B cell (primary cell): ENCODE measurements at regions of chr2 and their contacts with region 1.

Region 1: DNA sequence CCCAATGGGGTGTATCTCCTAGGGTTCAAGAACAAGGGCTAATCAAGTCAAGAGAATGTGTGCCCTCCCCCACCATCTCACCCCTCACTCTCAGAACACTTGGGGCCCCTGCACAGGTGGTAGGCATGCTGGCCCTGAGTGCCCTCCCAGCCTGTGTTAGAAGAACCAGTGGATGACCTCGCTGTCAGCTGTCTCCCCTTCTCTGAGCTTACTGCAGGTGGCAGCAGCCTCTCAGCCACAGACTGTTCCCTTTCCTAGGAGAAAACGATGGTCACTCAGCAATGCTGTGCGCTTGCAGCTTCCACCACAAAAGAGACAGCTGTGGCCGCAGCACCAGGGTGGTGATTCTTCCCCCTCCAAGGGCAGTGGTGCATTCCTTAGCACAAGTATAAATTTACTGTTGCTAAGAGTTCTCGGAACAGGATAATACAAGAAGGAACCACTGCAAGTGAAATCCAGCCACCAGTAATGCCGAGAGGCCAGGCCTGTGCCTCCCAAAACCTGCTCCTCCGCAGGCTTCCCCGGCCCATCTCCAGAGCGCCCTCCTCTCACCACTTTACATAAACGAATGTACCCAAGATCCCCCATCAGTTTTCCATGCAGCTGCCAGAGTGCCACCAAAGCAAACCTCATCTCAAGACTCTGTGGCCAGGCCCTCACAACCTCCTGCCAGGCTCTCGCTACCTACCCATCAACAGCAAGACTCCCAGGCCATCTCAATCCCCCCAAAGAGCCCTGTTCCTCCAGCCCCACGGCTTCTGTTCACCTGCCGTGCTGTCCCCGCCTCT is 935 bp upstream of the RAMP1 start:
- DNase-seq: peak; percentile 43
- ATAC-seq: peak; percentile 80
- H3K4me3 ChIP-seq: no peak overlapping the region
- H3K4me3 Mint-ChIP-seq: peak overlapping the region; percentile 62
- H3K27ac ChIP-seq: no peak overlapping the region
- H3K27ac Mint-ChIP-seq: no peak overlapping the region
- H3K4me1 ChIP-seq: no peaks in the 10 kb centered on the region
- H3K4me1 Mint-ChIP-seq: peaks cover 17% of the 10 kb centered on the region
- H3K27me3 ChIP-seq: peaks cover 0 to 37% (median 13%) of the 10 kb centered on the region in 4 experiments
- H3K27me3 Mint-ChIP-seq: peaks cover 44% of the 10 kb centered on the region
- CTCF ChIP-seq: peak; percentile 43

Region 2: DNA sequence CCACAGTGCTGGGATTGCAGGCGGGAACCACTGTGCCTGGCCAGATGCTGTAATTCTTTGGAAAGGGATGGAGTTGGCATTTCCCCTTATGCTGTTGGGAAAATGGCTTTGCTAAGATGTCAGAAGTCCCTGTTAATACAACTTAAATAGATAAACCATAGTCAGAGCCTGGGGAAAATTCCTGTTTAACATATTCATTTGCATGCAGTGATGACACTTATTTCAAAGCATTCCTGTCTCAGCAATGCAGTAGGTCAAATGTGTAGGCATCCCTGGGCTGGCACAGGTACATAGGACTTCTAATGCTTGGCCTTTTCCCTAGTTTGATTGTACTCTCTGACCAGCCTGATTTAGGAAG is 39.5 kb after region 1 on chr2:
- CTCF ChIA-PET with region 1: interaction called, 7 read pairs
- POLR2A ChIA-PET with region 1: no interaction called
- intact Hi-C with region 1: loop called (anchors 1 kb)
- DNase-seq: no peak
- ATAC-seq: no peak
- H3K4me3 ChIP-seq: no peak overlapping the region
- H3K4me3 Mint-ChIP-seq: peak overlapping the region; percentile 75
- H3K27ac ChIP-seq: peak overlapping the region; percentile 17 to 54
- H3K27ac Mint-ChIP-seq: peak overlapping the region; percentile 89
- H3K4me1 ChIP-seq: peaks cover 10 to 18% of the 10 kb centered on the region in 2 donors
- H3K4me1 Mint-ChIP-seq: peaks cover 42% of the 10 kb centered on the region
- H3K27me3 ChIP-seq: no peaks in the 10 kb centered on the region
- H3K27me3 Mint-ChIP-seq: no peaks in the 10 kb centered on the region
- CTCF ChIP-seq: no peak

Region 3: GRCh38 chr2:237923481-237924163 is 65.1 kb after region 1 on chr2:
- CTCF ChIA-PET with region 1: interaction called, 10 read pairs
- POLR2A ChIA-PET with region 1: interaction called, 4 read pairs
- intact Hi-C with region 1: loop called (anchors 2 kb)
- DNase-seq: peak; percentile 83
- ATAC-seq: peak; percentile 99
- H3K4me3 ChIP-seq: peak overlapping the region in 3 of 5 experiments; percentile 15 to 41 (median 30)
- H3K4me3 Mint-ChIP-seq: peak overlapping the region; percentile 65
- H3K27ac ChIP-seq: no peak overlapping the region
- H3K27ac Mint-ChIP-seq: peak overlapping the region; percentile 15
- H3K4me1 ChIP-seq: peaks cover 0 to 5% of the 10 kb centered on the region in 2 donors
- H3K4me1 Mint-ChIP-seq: peaks cover 18% of the 10 kb centered on the region
- H3K27me3 ChIP-seq: peaks cover 0 to 8% (median 0%) of the 10 kb centered on the region in 4 experiments
- H3K27me3 Mint-ChIP-seq: no peaks in the 10 kb centered on the region
- CTCF ChIP-seq: peak; percentile 99

Region 4: GRCh38 chr2:238015705-238016104 is 157.2 kb after region 1 on chr2:
- CTCF ChIA-PET with region 1: interaction called, 3 read pairs
- POLR2A ChIA-PET with region 1: no interaction called
- intact Hi-C with region 1: loop called (anchors 5 kb)
- DNase-seq: no peak
- ATAC-seq: no peak
- H3K4me3 ChIP-seq: no peak overlapping the region
- H3K4me3 Mint-ChIP-seq: no peak overlapping the region
- H3K27ac ChIP-seq: no peak overlapping the region
- H3K27ac Mint-ChIP-seq: no peak overlapping the region
- H3K4me1 ChIP-seq: peaks cover 0 to 5% of the 10 kb centered on the region in 2 donors
- H3K4me1 Mint-ChIP-seq: peaks cover 6% of the 10 kb centered on the region
- H3K27me3 ChIP-seq: no peaks in the 10 kb centered on the region
- H3K27me3 Mint-ChIP-seq: no peaks in the 10 kb centered on the region
- CTCF ChIP-seq: no peak